HepG2 (cell line): ENCODE measurements at regions of chr16 and their contacts with region 1.

Region 1: DNA sequence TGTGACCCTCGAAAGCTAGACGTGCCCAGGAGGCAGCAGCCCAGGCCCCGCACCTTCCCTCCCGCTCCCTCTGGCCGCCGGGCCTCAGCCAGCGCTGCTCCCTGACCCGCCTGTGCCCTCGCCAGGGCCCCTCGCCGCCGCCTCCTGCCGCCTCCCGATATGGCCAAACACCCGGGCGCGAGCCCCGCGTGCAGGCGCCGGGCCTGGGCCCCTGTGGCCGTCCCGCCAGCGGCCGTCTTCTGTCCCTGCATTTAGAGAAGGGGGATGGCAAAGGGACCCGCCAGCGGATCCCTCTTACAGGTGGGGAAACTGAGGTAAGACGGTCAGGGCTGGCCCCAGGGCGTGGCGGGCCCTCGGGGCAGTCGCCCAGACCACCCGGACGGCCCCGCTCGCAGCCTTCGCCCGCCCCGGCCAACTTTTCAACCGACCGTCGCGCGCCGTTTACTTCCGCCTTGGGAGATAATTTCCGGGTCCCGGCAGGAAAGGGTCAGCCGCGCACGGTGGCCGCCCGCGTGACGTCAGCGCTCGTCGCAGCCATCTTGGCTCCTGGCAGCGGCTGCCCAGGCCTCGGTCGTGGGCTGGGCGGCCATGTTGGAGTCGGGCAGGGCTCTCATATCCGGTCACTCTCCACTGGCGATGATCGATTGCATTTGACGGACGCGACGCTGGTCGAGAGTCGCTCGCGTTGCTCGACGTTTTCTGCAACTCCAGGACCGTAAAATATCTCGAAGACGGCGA is 7.0 kb upstream of the GNG13 start:
- DNase-seq: no peak
- ATAC-seq: no peak
- H3K4me3 ChIP-seq: no peak overlapping the region
- H3K27ac ChIP-seq: no peak overlapping the region
- H3K4me1 ChIP-seq: no peaks in the 10 kb centered on the region
- H3K27me3 ChIP-seq: peaks cover 30 to 75% of the 10 kb centered on the region in 2 experiments
- CTCF ChIP-seq: no peak
- EP300 ChIP-seq: no peak
- POLR2A ChIP-seq: no peak
- RAD21 ChIP-seq: no peak

Region 2: GRCh38 chr16:894841-895240 is 87.3 kb after region 1 on chr16:
- CTCF ChIA-PET with region 1: no interaction called
- POLR2A ChIA-PET with region 1: no interaction called
- in situ Hi-C with region 1: no loop called
- intact Hi-C with region 1: no loop called
- DNase-seq: no peak
- ATAC-seq: no peak; the same call in 2 of the 3 replicates
- H3K4me3 ChIP-seq: no peak overlapping the region
- H3K27ac ChIP-seq: no peak overlapping the region
- H3K4me1 ChIP-seq: no peaks in the 10 kb centered on the region
- H3K27me3 ChIP-seq: no peaks in the 10 kb centered on the region; a peak in 2 of 5 replicates
- CTCF ChIP-seq: peak; percentile 26; the same call in 1 of the 2 replicates
- EP300 ChIP-seq: no peak
- POLR2A ChIP-seq: no peak
- RAD21 ChIP-seq: no peak

Region 3: DNA sequence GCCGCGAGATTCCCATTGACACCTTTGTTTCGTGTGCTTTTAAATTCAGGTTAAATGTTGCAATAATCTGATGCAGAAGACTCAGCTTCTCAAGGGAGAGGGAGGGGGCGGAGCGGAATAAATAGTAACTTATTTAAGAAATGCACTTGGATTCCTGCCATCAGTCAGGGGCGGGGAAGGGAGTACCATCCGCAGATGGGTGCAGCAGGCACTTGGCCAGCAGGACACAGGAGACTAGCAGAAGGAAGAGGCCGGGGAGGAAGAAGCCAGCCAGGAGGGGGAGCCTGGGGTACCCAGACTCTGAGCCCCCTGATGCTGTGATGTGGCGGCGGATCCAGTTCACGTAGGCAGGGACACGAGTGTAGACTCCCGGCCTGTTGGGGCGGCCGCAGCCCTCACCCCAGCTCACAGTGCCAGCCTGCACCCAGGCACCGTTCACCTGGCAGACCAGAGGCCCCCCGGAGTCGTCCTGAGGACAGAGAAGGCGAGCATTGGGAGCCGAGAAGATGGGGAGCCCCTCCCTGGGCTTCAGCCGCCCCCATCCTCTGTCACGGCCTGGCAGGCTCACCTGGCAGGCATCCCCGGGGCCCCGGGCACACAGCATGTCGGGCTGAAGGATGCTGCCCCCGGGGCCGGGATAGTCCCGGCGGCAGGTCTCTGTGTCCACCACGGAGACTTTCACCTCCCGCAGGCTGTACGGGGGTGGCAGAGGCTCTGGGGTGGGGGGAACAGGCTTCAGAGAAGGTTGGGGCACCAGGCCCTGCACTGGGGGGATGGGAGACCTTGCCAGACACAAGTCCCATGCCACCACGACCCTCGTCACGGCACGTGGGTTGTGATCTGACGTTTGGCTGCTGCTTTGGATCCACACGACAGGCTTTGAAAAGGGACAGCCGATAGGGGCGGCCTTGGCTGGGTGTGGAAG is 414.4 kb after region 1 on chr16:
- CTCF ChIA-PET with region 1: no interaction called
- POLR2A ChIA-PET with region 1: no interaction called
- in situ Hi-C with region 1: loop called (anchors 25 kb)
- intact Hi-C with region 1: no loop called
- DNase-seq: no peak
- ATAC-seq: no peak
- H3K4me3 ChIP-seq: no peak overlapping the region
- H3K27ac ChIP-seq: no peak overlapping the region
- H3K4me1 ChIP-seq: peaks cover 10% of the 10 kb centered on the region
- H3K27me3 ChIP-seq: peaks cover 10 to 44% of the 10 kb centered on the region in 2 experiments; a peak in 4 of 5 replicates
- CTCF ChIP-seq: no peak
- EP300 ChIP-seq: no peak
- POLR2A ChIP-seq: no peak
- RAD21 ChIP-seq: no peak